Activated CD4-positive, alpha-beta memory T cell treated with anti-CD3 and anti-CD28 coated beads, Interleukin-2, amount 10 ng/mL, durations not matched to agents 7 days and 5 days (primary cell): ENCODE measurements at regions of chr9 and their contacts with region 1.

Region 1: GRCh38 chr9:4366591-4367330 is 66.9 kb upstream of the GLIS3 start:
- DNase-seq: peak; percentile 24
- H3K4me3 Mint-ChIP-seq: no peak overlapping the region
- H3K27ac Mint-ChIP-seq: no peak overlapping the region
- H3K4me1 Mint-ChIP-seq: peaks cover 2% of the 10 kb centered on the region
- H3K27me3 Mint-ChIP-seq: peaks cover 12% of the 10 kb centered on the region

Region 2: GRCh38 chr9:4099976-4100735 is 266.6 kb before region 1 on chr9:
- CTCF ChIA-PET with region 1: no interaction called
- POLR2A ChIA-PET with region 1: no interaction called
- DNase-seq: no peak
- H3K4me3 Mint-ChIP-seq: no peak overlapping the region
- H3K27ac Mint-ChIP-seq: no peak overlapping the region
- H3K4me1 Mint-ChIP-seq: peaks cover 6% of the 10 kb centered on the region
- H3K27me3 Mint-ChIP-seq: peaks cover 10% of the 10 kb centered on the region

Region 3: DNA sequence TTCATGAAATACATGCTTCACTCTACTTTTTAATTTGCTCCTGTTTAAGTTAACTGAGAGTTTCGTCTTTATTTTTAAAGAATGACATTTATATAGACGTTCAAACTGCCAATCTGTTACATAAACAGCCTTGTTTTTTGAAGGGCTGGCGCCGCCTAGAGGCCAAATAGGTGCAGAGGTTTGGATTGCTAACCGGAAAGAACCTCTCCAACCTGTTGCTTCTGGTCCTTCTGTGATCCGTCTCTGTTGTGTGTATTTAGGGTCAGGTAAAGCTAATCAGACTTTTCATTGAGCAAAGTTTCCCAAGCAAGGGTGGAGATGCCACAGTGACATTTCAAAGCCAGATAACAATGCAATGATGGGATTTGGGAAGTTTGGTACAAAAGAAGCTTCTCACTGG is 27.4 kb before region 1 on chr9:
- CTCF ChIA-PET with region 1: interaction called, 20 read pairs
- POLR2A ChIA-PET with region 1: no interaction called
- DNase-seq: peak; percentile 82
- H3K4me3 Mint-ChIP-seq: no peak overlapping the region
- H3K27ac Mint-ChIP-seq: no peak overlapping the region
- H3K4me1 Mint-ChIP-seq: peaks cover 6% of the 10 kb centered on the region
- H3K27me3 Mint-ChIP-seq: peaks cover 2% of the 10 kb centered on the region